A673 (cell line): ENCODE measurements at regions of chr5 and their contacts with region 1.

Region 1: GRCh38 chr5:30040488-30041118 is 1152.9 kb upstream of the CDH6 start:
- DNase-seq: peak; percentile 90
- H3K4me3 ChIP-seq: no peak overlapping the region
- H3K27ac ChIP-seq: peak overlapping the region; percentile 85
- H3K4me1 ChIP-seq: peaks cover 38% of the 10 kb centered on the region
- H3K27me3 ChIP-seq: no peaks in the 10 kb centered on the region
- CTCF ChIP-seq: peak; percentile 86

Region 2: GRCh38 chr5:29817342-29817741 is 223.3 kb before region 1 on chr5:
- CTCF ChIA-PET with region 1: no interaction called
- POLR2A ChIA-PET with region 1: no interaction called
- intact Hi-C with region 1: loop called (anchors 5 kb)
- DNase-seq: no peak
- H3K4me3 ChIP-seq: no peak overlapping the region
- H3K27ac ChIP-seq: no peak overlapping the region
- H3K4me1 ChIP-seq: peaks cover 4% of the 10 kb centered on the region
- H3K27me3 ChIP-seq: no peaks in the 10 kb centered on the region
- CTCF ChIP-seq: no peak

Region 3: DNA sequence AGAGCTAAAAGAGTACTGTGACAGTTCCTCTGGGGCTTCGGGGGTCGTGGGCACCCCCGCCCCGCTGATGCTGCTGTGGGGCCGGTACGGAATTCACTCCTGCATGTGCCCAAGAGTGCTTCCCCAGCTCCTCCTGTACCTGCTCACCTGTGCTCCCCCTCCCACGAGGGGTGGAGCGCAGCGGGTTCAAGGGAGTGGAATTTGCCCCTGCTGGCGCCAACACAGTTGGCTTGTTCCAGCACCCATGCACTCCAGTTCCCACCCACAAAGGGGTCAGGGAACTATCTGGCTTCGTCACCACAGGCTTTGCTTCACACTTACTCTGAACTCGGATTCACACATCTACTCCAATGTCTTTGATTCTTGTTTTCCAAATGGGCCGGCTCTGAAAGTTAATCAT is 66.0 kb after region 1 on chr5:
- CTCF ChIA-PET with region 1: no interaction called
- POLR2A ChIA-PET with region 1: no interaction called
- intact Hi-C with region 1: loop called (anchors 5 kb)
- DNase-seq: no peak
- H3K4me3 ChIP-seq: no peak overlapping the region
- H3K27ac ChIP-seq: no peak overlapping the region
- H3K4me1 ChIP-seq: peaks cover 40% of the 10 kb centered on the region
- H3K27me3 ChIP-seq: no peaks in the 10 kb centered on the region
- CTCF ChIP-seq: no peak

Region 4: GRCh38 chr5:30142432-30142831 is 101.8 kb after region 1 on chr5:
- CTCF ChIA-PET with region 1: no interaction called
- POLR2A ChIA-PET with region 1: no interaction called
- intact Hi-C with region 1: no loop called
- DNase-seq: no peak
- H3K4me3 ChIP-seq: no peak overlapping the region
- H3K27ac ChIP-seq: no peak overlapping the region
- H3K4me1 ChIP-seq: no peaks in the 10 kb centered on the region
- H3K27me3 ChIP-seq: no peaks in the 10 kb centered on the region
- CTCF ChIP-seq: no peak

Region 5: GRCh38 chr5:30401479-30402058 is 361.0 kb after region 1 on chr5:
- CTCF ChIA-PET with region 1: interaction called, 3 read pairs
- POLR2A ChIA-PET with region 1: no interaction called
- intact Hi-C with region 1: loop called (anchors 5 kb)
- DNase-seq: peak; percentile 70
- H3K4me3 ChIP-seq: no peak overlapping the region
- H3K27ac ChIP-seq: no peak overlapping the region
- H3K4me1 ChIP-seq: no peaks in the 10 kb centered on the region
- H3K27me3 ChIP-seq: no peaks in the 10 kb centered on the region
- CTCF ChIP-seq: peak; percentile 84

Region 6: DNA sequence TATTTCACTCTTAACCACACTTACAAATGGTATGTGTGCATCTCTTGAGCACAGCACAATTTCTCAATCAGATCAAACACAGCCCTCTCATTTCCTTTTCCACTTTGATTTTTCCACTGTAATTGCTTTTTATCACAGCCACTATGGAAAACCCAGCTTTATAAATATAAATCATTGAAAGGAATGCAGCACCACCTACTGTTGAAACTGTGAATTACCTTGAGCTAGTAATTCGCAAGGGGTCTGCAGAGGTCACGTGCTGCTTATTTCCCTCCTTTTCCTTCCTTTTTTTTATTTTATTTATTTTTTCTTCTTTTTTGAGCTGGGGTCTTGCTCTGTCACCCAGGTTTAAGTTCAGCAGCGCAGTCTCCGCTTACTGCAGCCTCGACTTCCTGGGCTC is 1229.8 kb after region 1 on chr5:
- CTCF ChIA-PET with region 1: interaction called, 4 read pairs
- POLR2A ChIA-PET with region 1: no interaction called
- intact Hi-C with region 1: loop called (anchors 5 kb)
- DNase-seq: peak; percentile 61
- H3K4me3 ChIP-seq: no peak overlapping the region
- H3K27ac ChIP-seq: no peak overlapping the region
- H3K4me1 ChIP-seq: peaks cover 11% of the 10 kb centered on the region
- H3K27me3 ChIP-seq: no peaks in the 10 kb centered on the region
- CTCF ChIP-seq: peak; percentile 77